ENCODE measurements at regions of chr15 and their contacts with region 1.

Region 1: GRCh38 chr15:33132722-33133345 is 61.7 kb downstream of the FMN1 start:
- DNase-seq: peak in 2 of 9 experiments; percentile 41 to 55
- ATAC-seq: no peak
- H3K4me3 ChIP-seq: no peak overlapping the region
- H3K4me3 Mint-ChIP-seq: no peak overlapping the region
- H3K27ac ChIP-seq: no peak overlapping the region
- H3K27ac Mint-ChIP-seq: no peak overlapping the region
- H3K4me1 ChIP-seq: peaks cover 7% of the 10 kb centered on the region
- H3K4me1 Mint-ChIP-seq: no peaks in the 10 kb centered on the region
- H3K27me3 ChIP-seq: no peaks in the 10 kb centered on the region
- H3K27me3 Mint-ChIP-seq: no peaks in the 10 kb centered on the region
- CTCF ChIP-seq: peak; percentile 26

Region 2: GRCh38 chr15:33086507-33087121 is 46.2 kb before region 1 on chr15:
- CTCF ChIA-PET with region 1: interaction called, 7 read pairs
- POLR2A ChIA-PET with region 1: no interaction called
- intact Hi-C with region 1: loop called in 1 of 2 experiments (anchors 1 kb)
- DNase-seq: peak in 3 of 9 experiments; percentile 13 to 70 (median 58)
- ATAC-seq: no peak
- H3K4me3 ChIP-seq: no peak overlapping the region
- H3K4me3 Mint-ChIP-seq: no peak overlapping the region
- H3K27ac ChIP-seq: no peak overlapping the region
- H3K27ac Mint-ChIP-seq: no peak overlapping the region
- H3K4me1 ChIP-seq: peaks cover 5% of the 10 kb centered on the region
- H3K4me1 Mint-ChIP-seq: no peaks in the 10 kb centered on the region
- H3K27me3 ChIP-seq: no peaks in the 10 kb centered on the region
- H3K27me3 Mint-ChIP-seq: no peaks in the 10 kb centered on the region
- CTCF ChIP-seq: peak; percentile 23

Region 3: DNA sequence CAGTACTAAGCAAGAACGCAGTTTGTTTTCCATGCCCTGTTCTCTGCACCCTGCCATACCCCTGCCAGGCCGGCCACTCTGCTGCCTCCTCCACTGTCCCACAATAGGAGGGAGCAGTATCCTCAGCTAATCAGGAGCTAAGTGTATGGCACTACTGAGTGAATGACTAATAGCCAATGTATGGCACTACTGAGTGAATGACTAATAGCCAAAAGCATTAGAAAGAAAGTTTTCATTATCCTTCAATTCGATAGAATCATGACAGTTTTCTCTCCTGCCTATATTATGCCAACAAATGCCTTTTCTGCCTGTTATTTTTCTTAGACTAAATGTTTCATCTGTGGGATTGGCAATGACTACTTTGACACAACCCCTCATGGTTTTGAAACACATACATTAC is 727.9 kb after region 1 on chr15:
- CTCF ChIA-PET with region 1: no interaction called
- POLR2A ChIA-PET with region 1: no interaction called
- intact Hi-C with region 1: no loop called
- DNase-seq: no peak
- ATAC-seq: no peak
- H3K4me3 ChIP-seq: no peak overlapping the region
- H3K4me3 Mint-ChIP-seq: no peak overlapping the region
- H3K27ac ChIP-seq: no peak overlapping the region
- H3K27ac Mint-ChIP-seq: no peak overlapping the region
- H3K4me1 ChIP-seq: no peaks in the 10 kb centered on the region
- H3K4me1 Mint-ChIP-seq: no peaks in the 10 kb centered on the region
- H3K27me3 ChIP-seq: no peaks in the 10 kb centered on the region
- H3K27me3 Mint-ChIP-seq: no peaks in the 10 kb centered on the region
- CTCF ChIP-seq: no peak